PC-9 (cell line): ENCODE measurements at regions of chr1 and their contacts with region 1.

Region 1: GRCh38 chr1:193417945-193418744 is 231.7 kb upstream of the B3GALT2 start:
- DNase-seq: no peak
- H3K4me3 ChIP-seq: peak overlapping the region; percentile 20; the same call in 1 of the 2 replicates
- H3K27ac ChIP-seq: no peak overlapping the region
- H3K4me1 ChIP-seq: no peaks in the 10 kb centered on the region
- H3K27me3 ChIP-seq: no peaks in the 10 kb centered on the region
- CTCF ChIP-seq: no peak

Region 2: DNA sequence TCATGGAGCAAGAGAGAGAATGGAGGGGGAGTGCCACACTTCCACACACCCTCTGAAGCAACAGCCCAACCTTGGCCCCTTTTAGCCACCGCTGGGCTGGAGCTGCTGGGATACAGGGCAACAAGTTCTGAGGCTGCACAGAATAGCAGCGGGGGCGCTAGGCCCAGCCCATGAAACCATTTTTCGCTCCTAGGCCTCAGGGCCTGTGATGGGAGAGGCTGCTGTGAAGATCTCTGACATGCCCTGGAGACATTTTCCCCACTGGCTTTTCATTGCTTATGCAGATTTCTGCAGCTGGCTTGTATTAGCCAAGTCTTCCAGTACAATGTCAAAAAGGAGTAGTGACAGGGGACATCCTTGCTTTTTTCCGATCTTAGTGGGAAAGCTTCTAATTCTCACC is 29.5 kb before region 1 on chr1:
- CTCF ChIA-PET with region 1: no interaction called
- POLR2A ChIA-PET with region 1: no interaction called
- intact Hi-C with region 1: no loop called
- DNase-seq: no peak
- H3K4me3 ChIP-seq: no peak overlapping the region
- H3K27ac ChIP-seq: no peak overlapping the region
- H3K4me1 ChIP-seq: no peaks in the 10 kb centered on the region
- H3K27me3 ChIP-seq: no peaks in the 10 kb centered on the region
- CTCF ChIP-seq: no peak

Region 3: DNA sequence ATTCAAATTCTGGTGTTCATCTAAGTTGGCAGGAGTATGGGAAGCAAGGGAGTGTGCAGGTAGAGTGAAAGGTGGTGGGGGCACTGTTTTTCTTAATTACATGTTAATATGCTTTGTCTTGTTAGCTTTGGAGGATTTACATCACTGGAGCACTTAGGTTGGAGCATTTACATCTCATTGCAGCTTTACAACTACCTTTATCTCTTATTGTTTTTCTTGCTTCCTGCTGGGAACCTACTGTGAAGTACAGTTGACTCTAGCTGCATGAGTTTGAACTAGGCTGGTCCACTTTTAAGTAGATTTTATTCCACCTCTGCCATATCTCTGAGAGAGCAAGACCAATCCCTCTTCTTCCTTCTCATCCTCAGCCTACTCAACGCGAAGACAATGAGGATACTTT is 323.1 kb after region 1 on chr1:
- CTCF ChIA-PET with region 1: interaction called, 12 read pairs
- POLR2A ChIA-PET with region 1: no interaction called
- intact Hi-C with region 1: no loop called
- DNase-seq: no peak
- H3K4me3 ChIP-seq: no peak overlapping the region
- H3K27ac ChIP-seq: no peak overlapping the region
- H3K4me1 ChIP-seq: no peaks in the 10 kb centered on the region
- H3K27me3 ChIP-seq: no peaks in the 10 kb centered on the region
- CTCF ChIP-seq: no peak